Dorsolateral prefrontal cortex (tissue), 120 donors: ENCODE measurements at regions of chr19 and their contacts with region 1.

Region 1: DNA sequence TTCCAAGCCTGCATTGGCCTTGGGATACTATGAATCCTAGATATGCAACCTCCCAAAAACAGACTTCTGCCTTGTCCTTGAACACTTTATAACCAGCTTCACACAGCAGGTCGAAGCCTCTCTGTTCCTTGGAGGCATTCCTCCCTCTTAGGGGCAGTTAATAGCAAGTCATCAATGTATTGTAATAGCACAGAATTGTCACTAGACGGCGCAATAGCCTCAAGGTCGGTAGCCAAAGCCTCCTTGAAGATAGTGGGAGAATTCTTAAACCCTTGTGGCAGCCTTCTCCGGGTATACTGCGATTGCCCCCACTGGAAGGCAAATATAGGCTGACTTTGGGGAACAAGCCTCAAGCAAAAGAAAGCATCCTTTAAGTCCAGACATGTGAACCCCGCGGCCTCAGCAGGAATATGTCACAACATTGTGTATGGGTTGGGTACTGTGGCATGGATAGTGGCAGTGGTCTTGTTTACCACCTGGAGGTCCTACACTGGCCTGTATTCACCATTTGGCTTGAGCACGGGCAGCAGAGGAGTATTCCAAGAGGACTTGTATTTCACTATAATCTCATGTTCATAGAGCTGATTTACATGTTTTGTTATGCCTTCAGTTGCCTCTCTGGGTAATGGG is 61.1 kb downstream of the ZNF431 start:
- DNase-seq: no peak
- H3K4me3 ChIP-seq: no peak overlapping the region
- H3K27ac ChIP-seq: no peak overlapping the region
- H3K27me3 ChIP-seq: peaks cover 0 to 6% (median 0%) of the 10 kb centered on the region in 45 donors
- CTCF ChIP-seq: peak; percentile 31 to 85 (median 73)

Region 2: GRCh38 chr19:21109116-21109515 is 93.9 kb before region 1 on chr19:
- intact Hi-C with region 1: no loop called
- DNase-seq: no peak
- H3K4me3 ChIP-seq: no peak overlapping the region
- H3K27ac ChIP-seq: no peak overlapping the region
- H3K27me3 ChIP-seq: no peaks in the 10 kb centered on the region
- CTCF ChIP-seq: no peak

Region 3: DNA sequence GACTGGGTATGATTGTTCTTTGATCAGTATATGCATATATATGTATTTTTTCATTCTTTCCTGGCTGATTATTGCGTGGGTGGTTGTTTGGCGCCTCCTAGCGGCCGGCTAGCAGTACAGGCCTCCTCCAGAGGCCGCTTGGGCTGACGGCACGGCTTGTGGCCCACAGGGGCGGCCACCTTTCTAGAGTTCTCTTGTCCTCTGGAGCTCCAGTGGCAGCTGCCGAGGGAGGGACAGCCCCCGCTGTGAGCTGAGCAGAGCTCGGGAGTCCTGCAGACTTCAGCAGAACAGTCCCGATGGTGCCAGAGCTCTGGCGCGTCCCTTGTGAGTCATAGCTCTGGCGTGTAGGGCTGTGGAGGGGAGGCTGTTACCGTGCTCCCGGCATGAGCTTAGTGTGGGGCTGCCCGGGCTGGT is 279.9 kb after region 1 on chr19:
- intact Hi-C with region 1: loop called in 1 of 2 experiments (anchors 5 kb)
- DNase-seq: peak in 5 of 10 donors; percentile 9 to 53 (median 31)
- H3K4me3 ChIP-seq: peak overlapping the region in 5 of 59 donors; percentile 1 to 33 (median 22)
- H3K27ac ChIP-seq: peak overlapping the region in 3 of 59 donors; percentile 5 to 16 (median 12)
- H3K27me3 ChIP-seq: no peaks in the 10 kb centered on the region
- CTCF ChIP-seq: peak in 55 of 56 donors; percentile 49 to 86 (median 71)

Region 4: GRCh38 chr19:21698215-21698614 is 495.2 kb after region 1 on chr19:
- intact Hi-C with region 1: loop called (anchors 10 kb)
- DNase-seq: no peak
- H3K4me3 ChIP-seq: no peak overlapping the region
- H3K27ac ChIP-seq: no peak overlapping the region
- H3K27me3 ChIP-seq: no peaks in the 10 kb centered on the region
- CTCF ChIP-seq: peak; percentile 16 to 79 (median 62)